ENCODE measurements at regions of chr20 and their contacts with region 1.

Region 1: DNA sequence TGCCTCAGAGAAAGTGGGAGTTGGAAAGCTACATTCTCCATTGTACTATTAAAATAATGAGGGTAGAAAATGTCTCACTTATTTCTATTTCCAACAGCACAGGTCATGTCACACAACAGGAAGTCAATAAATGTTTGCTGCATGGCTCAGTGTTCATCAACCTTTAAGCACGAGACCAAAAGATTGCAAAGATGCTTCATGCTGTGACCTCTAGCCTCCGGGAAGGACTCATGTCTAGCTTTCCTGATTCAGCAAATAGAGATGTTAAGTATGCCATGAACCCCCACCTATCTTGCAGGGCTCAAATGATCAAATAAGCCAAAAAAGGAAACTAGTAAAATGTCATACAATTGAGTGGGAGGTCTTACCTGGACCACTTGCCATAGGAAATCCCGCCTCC is 57.4 kb downstream of the NCOA6 start:
- DNase-seq: no peak
- H3K4me3 ChIP-seq: no peak overlapping the region
- H3K27ac ChIP-seq: no peak overlapping the region
- H3K4me1 ChIP-seq: no peaks in the 10 kb centered on the region
- H3K27me3 ChIP-seq: no peaks in the 10 kb centered on the region
- CTCF ChIP-seq: no peak

Region 2: DNA sequence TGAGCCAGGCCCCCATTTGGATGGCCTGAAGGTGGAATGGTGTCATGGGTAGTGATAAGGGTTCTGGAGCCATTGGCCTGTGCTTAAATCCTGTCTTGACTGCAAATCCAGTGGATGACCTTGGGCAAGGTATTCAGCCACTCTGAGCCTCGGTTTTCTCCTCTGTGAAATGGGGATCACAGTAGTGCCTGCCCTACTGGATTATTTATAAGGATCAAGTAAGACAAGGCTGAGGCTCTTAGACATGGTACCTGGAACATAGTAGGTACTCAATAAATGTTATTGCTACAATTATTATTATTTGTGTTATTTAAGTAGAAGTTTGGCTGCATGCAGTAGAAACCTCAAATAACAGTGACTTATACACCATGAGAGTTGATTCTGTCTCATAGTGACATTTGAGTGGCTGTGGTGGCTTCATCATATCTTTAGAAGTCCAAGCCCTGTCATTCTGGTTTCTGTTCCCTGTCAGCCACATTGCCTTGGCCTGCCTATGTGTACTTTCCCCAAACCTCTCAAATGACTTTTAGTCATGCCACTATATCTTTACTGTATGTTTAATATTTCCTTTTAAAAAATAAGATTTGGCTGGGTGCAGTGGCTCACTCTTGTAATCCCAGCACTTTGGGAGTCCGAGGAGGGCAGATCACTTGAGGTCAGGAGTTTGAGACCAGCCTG is 994.5 kb before region 1 on chr20:
- CTCF ChIA-PET with region 1: no interaction called
- POLR2A ChIA-PET with region 1: interaction called, 11 read pairs
- intact Hi-C with region 1: no loop called
- DNase-seq: no peak
- H3K4me3 ChIP-seq: no peak overlapping the region
- H3K27ac ChIP-seq: no peak overlapping the region
- H3K4me1 ChIP-seq: peaks cover 13% of the 10 kb centered on the region
- H3K27me3 ChIP-seq: no peaks in the 10 kb centered on the region
- CTCF ChIP-seq: no peak

Region 3: GRCh38 chr20:33966885-33967525 is 801.1 kb before region 1 on chr20:
- CTCF ChIA-PET with region 1: interaction called, 23 read pairs
- POLR2A ChIA-PET with region 1: no interaction called
- intact Hi-C with region 1: no loop called
- DNase-seq: no peak
- H3K4me3 ChIP-seq: no peak overlapping the region
- H3K27ac ChIP-seq: no peak overlapping the region
- H3K4me1 ChIP-seq: 0 out of 2 replicates have a peak, but pooled peaks cover 8% of the 10 kb centered on the region
- H3K27me3 ChIP-seq: no peaks in the 10 kb centered on the region
- CTCF ChIP-seq: no peak

Region 4: GRCh38 chr20:34282041-34282440 is 486.1 kb before region 1 on chr20:
- CTCF ChIA-PET with region 1: no interaction called
- POLR2A ChIA-PET with region 1: no interaction called
- intact Hi-C with region 1: no loop called
- DNase-seq: no peak
- H3K4me3 ChIP-seq: no peak overlapping the region
- H3K27ac ChIP-seq: no peak overlapping the region
- H3K4me1 ChIP-seq: no peaks in the 10 kb centered on the region
- H3K27me3 ChIP-seq: no peaks in the 10 kb centered on the region
- CTCF ChIP-seq: no peak

Region 5: GRCh38 chr20:34302723-34303528 is 465.2 kb before region 1 on chr20 and contains the start of gene AHCY:
- CTCF ChIA-PET with region 1: no interaction called
- POLR2A ChIA-PET with region 1: no interaction called
- intact Hi-C with region 1: loop called (anchors 10 kb)
- DNase-seq: peak; percentile 94 to 99
- H3K4me3 ChIP-seq: peak within 1 kb of the TSS; percentile 99
- H3K27ac ChIP-seq: peak within 1 kb of the TSS; percentile 81
- H3K4me1 ChIP-seq: peaks cover 20% of the 10 kb centered on the region
- H3K27me3 ChIP-seq: no peaks in the 10 kb centered on the region
- CTCF ChIP-seq: peak; percentile 13; the same call in 1 of the 2 replicates
- total RNA-seq, gene AHCY: 247 and 273 TPM in 2 replicates

Region 6: DNA sequence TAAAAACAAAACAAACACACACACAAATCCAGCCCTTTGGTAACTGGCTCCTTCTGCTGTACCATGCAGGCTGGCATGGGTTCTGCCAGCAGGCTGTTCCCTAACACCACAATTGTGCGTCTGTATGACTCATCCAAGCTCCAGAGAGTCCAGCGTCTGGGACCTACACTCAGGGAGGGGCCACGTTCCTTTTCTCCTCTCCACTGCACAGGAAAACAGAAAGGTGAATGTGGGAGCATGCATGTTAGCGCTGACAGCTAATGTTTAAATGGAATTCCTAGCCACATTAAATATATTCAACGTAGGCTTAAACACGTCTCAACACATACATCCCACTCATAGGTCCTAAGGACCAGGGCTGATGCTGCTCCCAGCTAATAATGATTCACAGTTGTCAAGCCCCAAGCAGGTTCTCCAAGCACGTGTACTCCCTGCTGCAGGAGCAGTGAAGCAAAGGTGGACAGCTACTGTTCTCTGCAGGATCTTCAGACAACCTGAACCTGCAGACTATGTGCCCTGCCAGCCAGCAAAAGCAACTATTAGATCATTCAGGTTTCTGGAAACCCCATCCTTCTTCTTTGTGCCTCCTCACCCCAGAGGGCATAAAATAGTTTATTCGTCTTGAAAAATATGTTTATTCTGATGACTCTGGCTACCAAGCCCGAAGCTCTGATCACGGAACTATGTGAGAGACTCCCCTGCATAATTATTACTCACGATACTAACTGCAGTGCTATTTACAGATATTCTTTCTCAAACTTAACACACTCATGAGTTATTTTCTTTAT is 188.7 kb before region 1 on chr20:
- CTCF ChIA-PET with region 1: interaction called, 13 read pairs
- POLR2A ChIA-PET with region 1: interaction called, 11 read pairs
- intact Hi-C with region 1: loop called (anchors 1 kb)
- DNase-seq: peak; percentile 61 to 78
- H3K4me3 ChIP-seq: no peak overlapping the region
- H3K27ac ChIP-seq: no peak overlapping the region
- H3K4me1 ChIP-seq: peaks cover 31% of the 10 kb centered on the region
- H3K27me3 ChIP-seq: no peaks in the 10 kb centered on the region
- CTCF ChIP-seq: peak; percentile 79

Region 7: GRCh38 chr20:34791289-34792020 is 23.4 kb after region 1 on chr20:
- CTCF ChIA-PET with region 1: no interaction called
- POLR2A ChIA-PET with region 1: interaction called, 11 read pairs
- intact Hi-C with region 1: no loop called
- DNase-seq: peak in 1 of 2 experiments; percentile 36
- H3K4me3 ChIP-seq: no peak overlapping the region
- H3K27ac ChIP-seq: peak overlapping the region; percentile 58
- H3K4me1 ChIP-seq: peaks cover 14% of the 10 kb centered on the region
- H3K27me3 ChIP-seq: no peaks in the 10 kb centered on the region
- CTCF ChIP-seq: no peak